A673 (cell line): ENCODE measurements at regions of chr15 and their contacts with region 1.

Region 1: DNA sequence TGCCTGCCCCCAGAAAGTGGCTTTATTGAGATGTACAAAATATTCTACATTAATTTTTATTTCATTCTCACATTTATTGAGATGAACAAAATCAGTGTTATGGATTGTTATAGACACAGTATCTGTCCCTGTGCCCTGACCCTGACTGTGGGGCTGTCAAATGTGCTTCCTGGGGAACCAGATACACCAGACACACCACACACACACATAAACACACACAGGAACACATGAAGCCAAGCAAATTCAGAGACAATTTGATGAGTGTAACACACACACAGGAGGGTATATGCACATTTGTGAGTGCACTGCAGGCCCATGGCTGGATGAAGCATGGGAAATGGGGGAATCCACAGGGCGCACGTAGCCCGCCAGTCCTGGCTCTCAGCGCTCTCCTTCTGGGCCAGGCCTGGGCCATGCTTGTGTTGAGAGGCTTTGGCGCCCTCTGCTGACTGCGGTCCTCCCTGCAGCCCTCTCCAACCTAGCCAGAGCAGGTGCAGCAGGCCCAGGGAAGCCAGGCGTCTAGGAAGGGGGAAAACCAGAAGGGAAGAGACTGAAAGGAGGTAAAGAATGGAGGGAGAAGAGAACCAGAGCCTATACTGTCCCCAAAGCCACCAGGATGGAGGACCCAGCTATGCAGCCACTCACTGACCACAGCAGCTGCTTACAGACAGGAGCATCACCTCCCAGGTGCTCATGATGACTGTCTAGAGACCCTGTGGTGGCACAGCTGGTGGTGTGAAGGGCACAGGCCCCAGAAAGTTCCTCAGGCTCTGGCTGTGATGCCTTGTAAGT is 18.0 kb upstream of the LOXL1 start:
- DNase-seq: peak; percentile 78
- H3K4me3 ChIP-seq: no peak overlapping the region
- H3K27ac ChIP-seq: no peak overlapping the region
- H3K4me1 ChIP-seq: peaks cover 11% of the 10 kb centered on the region
- H3K27me3 ChIP-seq: no peaks in the 10 kb centered on the region
- CTCF ChIP-seq: peak; percentile 95

Region 2: DNA sequence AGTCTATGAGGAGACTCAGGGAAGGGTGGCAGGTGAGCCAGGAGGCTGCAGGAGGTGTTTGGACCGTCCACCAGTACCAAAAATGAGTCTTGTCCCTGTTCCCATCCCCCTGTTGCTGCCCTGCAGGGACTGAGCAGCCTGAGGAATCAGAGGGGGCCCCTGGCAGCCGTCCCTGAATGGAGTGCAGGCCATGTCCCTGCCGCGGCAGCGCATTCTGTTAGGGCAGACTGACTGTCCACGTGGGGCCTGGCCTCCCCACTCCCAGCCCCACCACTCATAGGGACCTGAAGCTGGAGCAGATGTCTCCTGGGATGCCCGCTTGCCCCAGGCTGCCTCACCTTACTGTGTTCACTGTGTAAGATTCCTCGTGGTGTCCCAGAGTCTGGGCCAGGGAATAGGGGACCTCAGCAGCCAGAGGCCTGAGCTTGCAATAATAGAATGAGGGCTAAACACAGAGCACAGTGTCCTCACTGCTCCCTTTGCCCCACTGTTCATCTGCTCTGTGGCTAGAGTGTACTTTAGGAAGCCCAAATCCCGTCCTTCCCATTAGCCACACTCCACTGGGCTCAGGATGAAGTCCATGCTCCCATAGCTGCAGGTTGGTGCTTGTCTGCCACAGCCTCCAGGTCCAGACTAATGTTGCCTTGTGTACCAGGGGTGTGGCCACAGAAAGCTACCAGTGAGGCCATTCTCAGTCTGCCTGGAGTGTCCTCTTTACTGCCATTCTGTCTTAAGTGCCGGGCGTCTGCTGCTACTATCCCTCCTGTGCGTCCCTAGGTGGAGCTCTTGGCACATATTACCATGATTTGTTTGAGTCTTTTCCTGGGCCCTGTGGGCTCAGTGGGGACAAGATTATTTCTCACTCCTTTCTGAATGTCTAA is 602.7 kb before region 1 on chr15:
- CTCF ChIA-PET with region 1: no interaction called
- POLR2A ChIA-PET with region 1: no interaction called
- intact Hi-C with region 1: loop called (anchors 5 kb)
- DNase-seq: peak; percentile 71
- H3K4me3 ChIP-seq: no peak overlapping the region
- H3K27ac ChIP-seq: no peak overlapping the region
- H3K4me1 ChIP-seq: no peaks in the 10 kb centered on the region
- H3K27me3 ChIP-seq: no peaks in the 10 kb centered on the region
- CTCF ChIP-seq: peak; percentile 72

Region 3: DNA sequence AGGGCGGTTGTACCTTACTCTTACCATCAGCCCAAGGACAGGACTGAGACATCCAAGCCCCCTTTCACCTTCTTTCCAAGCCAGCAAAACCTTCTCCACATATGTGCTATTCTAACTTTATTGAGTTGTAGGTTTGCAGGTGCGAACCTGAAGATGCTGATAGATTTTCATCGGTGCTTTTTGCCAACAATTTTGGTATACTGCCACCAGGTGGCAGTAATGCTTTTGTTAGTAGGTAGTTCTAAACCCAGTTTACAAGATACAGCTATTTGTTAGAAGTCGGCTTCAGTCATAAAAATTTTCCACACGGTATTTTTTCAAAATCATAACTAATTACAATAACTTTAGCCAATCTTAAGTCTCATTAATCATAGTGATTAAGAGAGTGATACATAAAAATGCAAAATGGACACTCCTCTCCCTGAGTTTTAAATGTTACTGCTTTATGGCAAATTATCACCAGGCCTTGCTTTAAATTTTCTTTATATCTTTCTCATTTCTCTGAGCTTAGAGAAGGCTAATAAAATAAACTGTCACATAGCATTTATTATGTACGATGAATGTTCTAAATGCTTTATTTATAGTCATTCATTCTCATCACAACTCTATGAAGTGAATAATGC is 34.2 kb before region 1 on chr15:
- CTCF ChIA-PET with region 1: interaction called, 3 read pairs
- POLR2A ChIA-PET with region 1: no interaction called
- intact Hi-C with region 1: loop called (anchors 2 kb)
- DNase-seq: peak; percentile 65
- H3K4me3 ChIP-seq: no peak overlapping the region
- H3K27ac ChIP-seq: no peak overlapping the region
- H3K4me1 ChIP-seq: no peaks in the 10 kb centered on the region
- H3K27me3 ChIP-seq: peaks cover 50% of the 10 kb centered on the region
- CTCF ChIP-seq: peak; percentile 76

Region 4: GRCh38 chr15:74007820-74008371 is 99.7 kb after region 1 on chr15:
- CTCF ChIA-PET with region 1: no interaction called
- POLR2A ChIA-PET with region 1: no interaction called
- intact Hi-C with region 1: no loop called
- DNase-seq: no peak
- H3K4me3 ChIP-seq: no peak overlapping the region
- H3K27ac ChIP-seq: no peak overlapping the region
- H3K4me1 ChIP-seq: no peaks in the 10 kb centered on the region
- H3K27me3 ChIP-seq: no peaks in the 10 kb centered on the region
- CTCF ChIP-seq: no peak